IMR-90 (cell line): ENCODE measurements at regions of chr3 and their contacts with region 1.

Region 1: GRCh38 chr3:143885780-143886427 is 37.6 kb upstream of the SLC9A9 start:
- DNase-seq: peak; percentile 34
- ATAC-seq: peak; percentile 81
- H3K4me3 ChIP-seq: no peak overlapping the region
- H3K27ac ChIP-seq: no peak overlapping the region
- H3K4me1 ChIP-seq: no peaks in the 10 kb centered on the region
- H3K27me3 ChIP-seq: no peaks in the 10 kb centered on the region; the same call in 1 of the 2 replicates
- CTCF ChIP-seq: peak; percentile 66
- POLR2A ChIP-seq: no peak
- RAD21 ChIP-seq: peak; percentile 57

Region 2: GRCh38 chr3:143775459-143775858 is 110.4 kb before region 1 on chr3:
- CTCF ChIA-PET with region 1: no interaction called
- POLR2A ChIA-PET with region 1: no interaction called
- dilution Hi-C with region 1: no loop called
- in situ Hi-C with region 1: no loop called
- intact Hi-C with region 1: loop called (anchors 5 kb)
- DNase-seq: peak; percentile 13
- ATAC-seq: peak; percentile 87
- H3K4me3 ChIP-seq: no peak overlapping the region
- H3K27ac ChIP-seq: no peak overlapping the region
- H3K4me1 ChIP-seq: no peaks in the 10 kb centered on the region; the same call in 1 of the 2 replicates
- H3K27me3 ChIP-seq: no peaks in the 10 kb centered on the region
- CTCF ChIP-seq: peak; percentile 56
- POLR2A ChIP-seq: no peak
- RAD21 ChIP-seq: peak; percentile 63

Region 3: DNA sequence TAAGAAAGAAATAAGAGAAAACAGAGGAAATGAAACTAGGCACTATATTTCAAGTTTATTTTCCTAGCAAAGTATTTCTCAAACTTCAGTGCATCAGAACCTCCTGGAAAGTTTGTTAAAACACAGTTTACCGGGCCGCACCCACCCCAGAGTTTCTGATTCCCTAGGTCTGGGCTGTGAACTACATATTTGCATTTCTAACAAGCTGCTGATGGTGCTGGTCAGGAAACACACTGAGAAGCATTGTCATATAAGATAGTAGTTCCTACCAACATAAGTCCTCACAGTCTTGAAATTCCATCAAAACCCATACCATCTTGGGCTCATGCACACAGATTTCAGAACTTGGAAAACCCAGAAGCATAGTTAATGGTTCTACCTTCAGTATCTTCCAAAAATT is 45.9 kb before region 1 on chr3:
- CTCF ChIA-PET with region 1: no interaction called
- POLR2A ChIA-PET with region 1: no interaction called
- dilution Hi-C with region 1: no loop called
- in situ Hi-C with region 1: no loop called
- intact Hi-C with region 1: no loop called
- DNase-seq: no peak
- ATAC-seq: no peak
- H3K4me3 ChIP-seq: no peak overlapping the region
- H3K27ac ChIP-seq: no peak overlapping the region
- H3K4me1 ChIP-seq: no peaks in the 10 kb centered on the region
- H3K27me3 ChIP-seq: no peaks in the 10 kb centered on the region
- CTCF ChIP-seq: no peak
- POLR2A ChIP-seq: no peak
- RAD21 ChIP-seq: no peak